GM10248 (cell line): ENCODE measurements at regions of chr6 and their contacts with region 1.

Region 1: GRCh38 chr6:150685860-150686259 is 86.2 kb downstream of the PLEKHG1 start:
- DNase-seq: peak; percentile 69
- CTCF ChIP-seq: peak; percentile 77

Region 2: GRCh38 chr6:150697515-150697914 is 11.7 kb after region 1 on chr6:
- CTCF ChIA-PET with region 1: interaction called, 26 read pairs
- POLR2A ChIA-PET with region 1: no interaction called
- DNase-seq: no peak
- CTCF ChIP-seq: no peak

Region 3: GRCh38 chr6:150741633-150742504 is 56.0 kb after region 1 on chr6:
- CTCF ChIA-PET with region 1: interaction called, 21 read pairs
- POLR2A ChIA-PET with region 1: no interaction called
- DNase-seq: peak; percentile 32
- CTCF ChIP-seq: peak; percentile 45